AG04449 (cell line): ENCODE measurements at regions of chr6 and their contacts with region 1.

Region 1: DNA sequence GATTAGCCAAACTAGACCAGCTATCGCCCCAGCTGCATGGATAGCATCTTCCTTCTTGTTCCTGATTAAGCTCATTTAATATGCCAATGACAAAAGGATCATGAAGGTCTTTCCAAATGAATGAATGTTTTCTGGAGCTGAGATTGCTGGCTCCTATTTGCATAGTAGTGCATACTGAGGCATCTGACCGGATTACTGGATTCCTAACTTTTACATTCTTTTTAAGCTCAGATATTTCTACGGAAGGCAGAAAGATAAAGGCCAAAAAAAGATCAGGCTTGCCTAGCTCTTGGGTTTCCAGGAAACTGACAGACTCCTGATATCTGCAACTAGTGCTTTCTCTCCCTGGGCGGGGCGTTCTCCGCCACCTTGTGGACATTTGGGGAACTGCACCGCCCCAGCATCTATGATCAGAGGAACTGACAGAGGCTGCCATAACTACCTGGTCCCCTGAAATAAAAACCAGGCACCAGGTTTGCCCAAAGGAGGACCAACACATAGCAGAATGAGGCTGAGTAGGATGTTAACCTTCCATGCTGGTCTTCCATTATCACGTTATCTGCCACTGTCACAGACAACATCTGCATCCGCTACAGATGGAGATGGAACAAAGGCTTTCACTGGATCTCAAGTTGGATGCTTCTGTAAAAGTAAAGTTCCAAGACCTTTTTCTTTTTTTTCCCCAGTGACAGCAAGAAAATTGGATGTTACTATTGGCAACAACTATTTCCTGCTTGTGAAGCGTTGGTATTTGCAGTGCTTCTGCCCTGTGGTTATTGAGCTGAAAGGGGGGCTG is 33.2 kb downstream of the NT5E start:
- DNase-seq: peak; percentile 37
- H3K4me3 ChIP-seq: no peak overlapping the region
- CTCF ChIP-seq: peak; percentile 96

Region 2: DNA sequence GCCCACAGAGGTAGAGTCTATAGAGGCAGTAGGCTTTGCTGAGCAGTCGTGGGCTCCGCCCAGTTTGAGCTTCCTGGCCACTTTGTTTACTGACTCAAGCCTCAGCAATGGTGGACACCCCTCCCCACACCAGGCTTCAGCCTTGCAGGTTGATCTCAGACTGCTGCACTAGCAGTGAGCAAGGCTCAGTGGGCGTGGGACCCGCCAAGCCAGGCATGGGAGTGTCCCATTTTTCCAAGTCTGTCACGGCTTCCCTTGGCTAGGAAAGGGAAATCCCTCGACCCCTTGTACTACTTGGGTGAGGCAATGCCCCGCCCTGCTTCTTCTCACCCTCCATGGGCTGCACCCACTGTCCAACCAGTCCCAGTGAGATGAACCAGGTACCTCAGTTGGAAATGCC is 168.5 kb before region 1 on chr6:
- CTCF ChIA-PET with region 1: no interaction called
- POLR2A ChIA-PET with region 1: no interaction called
- DNase-seq: no peak
- H3K4me3 ChIP-seq: no peak overlapping the region
- CTCF ChIP-seq: no peak

Region 3: DNA sequence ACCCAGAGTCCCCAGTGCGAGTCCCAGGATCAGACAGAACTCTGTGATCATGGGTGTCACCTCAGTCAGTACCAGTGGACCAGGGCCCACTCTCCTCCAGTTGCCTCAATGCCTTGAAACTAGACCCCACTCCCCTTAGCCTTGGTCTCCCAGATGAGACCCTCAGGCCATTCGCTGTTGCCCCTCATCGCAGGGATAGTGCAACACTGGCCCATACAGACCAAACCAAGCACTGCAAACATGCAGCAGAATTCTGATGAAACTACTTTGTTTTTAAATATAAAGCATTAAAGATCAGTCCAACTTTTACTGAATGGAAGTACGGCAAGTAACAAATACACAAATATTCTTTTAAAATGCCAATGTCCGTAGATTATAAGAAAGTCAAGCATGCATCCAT is 134.5 kb before region 1 on chr6:
- CTCF ChIA-PET with region 1: interaction called, 366 read pairs
- POLR2A ChIA-PET with region 1: no interaction called
- DNase-seq: no peak
- H3K4me3 ChIP-seq: no peak overlapping the region
- CTCF ChIP-seq: no peak

Region 4: GRCh38 chr6:85360794-85361642 is 122.1 kb before region 1 on chr6:
- CTCF ChIA-PET with region 1: interaction called, 366 read pairs
- POLR2A ChIA-PET with region 1: interaction called, 3 read pairs
- DNase-seq: peak; percentile 86
- H3K4me3 ChIP-seq: no peak overlapping the region
- CTCF ChIP-seq: no peak

Region 5: GRCh38 chr6:85404502-85405174 is 78.5 kb before region 1 on chr6:
- CTCF ChIA-PET with region 1: interaction called, 21 read pairs
- POLR2A ChIA-PET with region 1: interaction called, 10 read pairs
- DNase-seq: peak; percentile 90
- H3K4me3 ChIP-seq: no peak overlapping the region; the same call in 1 of the 2 replicates
- CTCF ChIP-seq: no peak

Region 6: GRCh38 chr6:85460921-85461797 is 21.9 kb before region 1 on chr6:
- CTCF ChIA-PET with region 1: interaction called, 115 read pairs
- POLR2A ChIA-PET with region 1: interaction called, 7 read pairs
- DNase-seq: no peak
- H3K4me3 ChIP-seq: no peak overlapping the region
- CTCF ChIP-seq: no peak

Region 7: GRCh38 chr6:85498596-85499258 is 15.6 kb after region 1 on chr6:
- CTCF ChIA-PET with region 1: interaction called, 146 read pairs
- POLR2A ChIA-PET with region 1: interaction called, 4 read pairs
- DNase-seq: no peak
- H3K4me3 ChIP-seq: no peak overlapping the region
- CTCF ChIP-seq: no peak

Region 8: DNA sequence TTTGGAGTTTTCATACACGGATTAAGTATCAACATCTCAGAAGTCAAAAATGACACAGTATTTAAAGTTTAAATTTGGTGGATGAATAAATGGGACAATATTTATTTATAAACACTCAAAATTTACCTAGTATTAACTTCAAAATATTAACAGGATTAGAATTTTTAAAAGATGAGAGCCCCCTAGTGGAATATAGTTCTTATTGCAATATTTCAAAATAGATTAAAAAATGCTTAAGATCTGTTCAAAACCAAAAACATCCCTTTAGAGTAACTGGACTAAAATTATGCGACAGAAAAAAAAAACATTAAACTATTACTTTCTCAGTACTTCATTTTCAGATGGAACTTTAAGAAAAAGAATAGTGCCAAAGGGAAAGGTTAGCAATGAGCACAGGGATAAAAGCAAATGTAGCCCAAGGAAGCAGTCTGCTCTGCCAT is 54.0 kb after region 1 on chr6:
- CTCF ChIA-PET with region 1: interaction called, 21 read pairs
- POLR2A ChIA-PET with region 1: no interaction called
- DNase-seq: no peak
- H3K4me3 ChIP-seq: no peak overlapping the region
- CTCF ChIP-seq: peak; percentile 5